ENCODE measurements at regions of chr10 and their contacts with region 1.

Region 1: GRCh38 chr10:119502209-119502608 is 40.3 kb downstream of the RGS10 start:
- DNase-seq: peak; percentile 83
- ATAC-seq: peak; percentile 90
- H3K4me3 Mint-ChIP-seq: peak overlapping the region; percentile 60
- H3K27ac Mint-ChIP-seq: peak overlapping the region; percentile 91
- H3K4me1 Mint-ChIP-seq: peaks cover 81% of the 10 kb centered on the region
- H3K27me3 Mint-ChIP-seq: no peaks in the 10 kb centered on the region

Region 2: GRCh38 chr10:119542988-119543813 is 41.0 kb after region 1 on chr10:
- POLR2A ChIA-PET with region 1: interaction called, 11 read pairs
- DNase-seq: peak; percentile 81
- ATAC-seq: peak; percentile 25
- H3K4me3 Mint-ChIP-seq: peak overlapping the region; percentile 87
- H3K27ac Mint-ChIP-seq: peak overlapping the region; percentile 91
- H3K4me1 Mint-ChIP-seq: peaks cover 29% of the 10 kb centered on the region
- H3K27me3 Mint-ChIP-seq: peaks cover 14% of the 10 kb centered on the region